CD8-positive, alpha-beta memory T cell (primary cell): ENCODE measurements at regions of chr14 and their contacts with region 1.

Region 1: DNA sequence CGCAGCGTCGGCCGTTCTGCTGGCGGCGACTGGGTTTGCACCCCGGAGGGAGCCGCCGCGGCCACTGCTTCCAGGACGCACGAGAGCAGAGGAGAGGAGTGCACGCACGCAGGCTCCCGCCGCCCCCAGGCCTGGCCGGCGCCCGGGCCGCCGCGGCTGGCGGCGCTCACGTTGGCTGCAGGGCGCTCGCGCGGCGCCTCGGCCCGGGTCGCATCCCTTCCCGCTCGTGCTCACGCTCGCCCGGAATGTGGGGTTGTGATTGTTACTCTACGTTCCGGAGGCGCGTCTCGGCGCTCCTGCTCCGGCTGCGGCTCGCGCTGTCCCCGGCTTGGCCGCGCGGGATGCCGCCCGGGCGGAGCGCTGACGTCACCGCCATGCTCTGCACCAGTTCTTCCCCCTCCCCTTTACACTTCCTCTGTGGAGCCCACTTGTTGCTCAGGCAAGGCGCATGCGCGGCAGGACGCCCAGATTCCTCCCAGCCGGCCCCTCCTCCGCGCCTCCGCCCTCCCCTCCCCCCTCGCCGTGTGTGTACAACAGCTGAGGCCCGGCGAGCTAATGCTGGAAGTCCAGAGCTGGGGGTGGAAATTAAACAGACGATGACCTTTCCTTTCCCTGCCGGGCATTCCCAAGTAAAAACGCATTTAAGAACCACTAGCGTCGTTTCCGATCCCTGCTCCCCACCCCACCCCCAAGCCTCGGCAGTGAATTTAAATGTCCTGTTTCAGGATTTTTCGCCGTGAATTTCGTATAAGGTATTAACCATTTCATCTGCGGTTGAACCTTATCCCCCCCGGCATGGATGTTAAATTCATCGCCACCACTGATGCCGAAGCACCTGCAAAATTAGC is at the start of gene IRF2BPL:
- DNase-seq: peak; percentile 89 to 97 (median 93)
- H3K4me3 ChIP-seq: peak within 1 kb of the TSS; percentile 72
- H3K4me3 Mint-ChIP-seq: peak within 1 kb of the TSS; percentile 91 to 96 (median 94)
- H3K27ac ChIP-seq: peak within 1 kb of the TSS; percentile 87
- H3K27ac Mint-ChIP-seq: peak within 1 kb of the TSS; percentile 94 to 100 (median 98)
- H3K4me1 ChIP-seq: peaks cover 69% of the 10 kb centered on the region
- H3K4me1 Mint-ChIP-seq: peaks cover 51 to 69% (median 58%) of the 10 kb centered on the region in 3 donors
- H3K27me3 ChIP-seq: no peaks in the 10 kb centered on the region
- H3K27me3 Mint-ChIP-seq: peaks cover 0 to 3% of the 10 kb centered on the region in 2 donors
- total RNA-seq, gene IRF2BPL: 25.6 to 27.2 TPM

Region 2: DNA sequence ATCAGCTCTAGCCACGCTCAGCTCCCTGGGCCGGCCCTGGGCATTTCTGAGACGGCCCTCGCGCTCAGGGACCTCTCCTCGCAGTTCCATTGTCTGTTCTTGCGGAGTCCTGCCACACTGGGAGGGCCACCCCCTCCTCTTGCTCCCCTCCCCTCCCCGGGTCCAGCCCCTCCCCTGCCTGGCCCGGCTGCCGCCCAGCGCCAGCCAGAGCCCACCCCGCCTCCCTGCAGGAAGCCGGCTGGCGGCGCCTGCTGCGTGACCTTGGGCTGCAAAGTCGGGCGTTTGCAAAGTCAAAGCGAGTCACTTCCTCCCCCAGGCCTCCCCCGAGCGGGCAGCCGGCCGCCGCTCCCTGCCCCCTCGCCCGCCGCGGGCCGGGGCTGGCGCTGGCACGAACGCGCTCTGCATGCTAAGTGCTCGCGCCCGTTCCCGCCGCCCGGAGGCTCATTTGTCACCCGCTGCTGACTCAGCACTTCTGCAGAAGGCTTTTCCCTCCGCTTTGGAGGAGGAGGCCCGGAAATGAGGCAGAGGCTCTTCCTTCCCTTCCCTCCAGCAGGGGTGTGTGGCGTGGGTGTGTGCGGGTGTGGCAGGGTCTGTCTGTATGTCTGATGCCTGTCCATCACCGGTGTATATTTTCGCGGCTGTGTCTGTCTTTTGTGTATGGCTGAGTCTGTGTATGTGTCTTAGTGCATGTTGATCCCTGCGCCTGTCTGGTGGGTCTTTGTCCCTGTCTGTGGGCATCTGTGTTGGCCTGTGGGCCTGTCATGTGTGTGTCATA is 72.1 kb before region 1 on chr14:
- CTCF ChIA-PET with region 1: interaction called, 36 read pairs
- POLR2A ChIA-PET with region 1: interaction called, 37 read pairs
- DNase-seq: peak; percentile 82 to 91 (median 87)
- H3K4me3 ChIP-seq: peak overlapping the region; percentile 50
- H3K4me3 Mint-ChIP-seq: peak overlapping the region; percentile 86 to 95 (median 87)
- H3K27ac ChIP-seq: peak overlapping the region; percentile 94
- H3K27ac Mint-ChIP-seq: peak overlapping the region; percentile 95 to 100 (median 99)
- H3K4me1 ChIP-seq: peaks cover 50% of the 10 kb centered on the region
- H3K4me1 Mint-ChIP-seq: peaks cover 59 to 74% (median 65%) of the 10 kb centered on the region in 3 donors
- H3K27me3 ChIP-seq: no peaks in the 10 kb centered on the region
- H3K27me3 Mint-ChIP-seq: peaks cover 0 to 1% of the 10 kb centered on the region in 2 donors

Region 3: GRCh38 chr14:77040059-77040740 is 11.6 kb after region 1 on chr14:
- CTCF ChIA-PET with region 1: interaction called, 22 read pairs
- POLR2A ChIA-PET with region 1: interaction called, 62 read pairs
- DNase-seq: peak; percentile 93 to 99 (median 97)
- H3K4me3 ChIP-seq: peak overlapping the region; percentile 82
- H3K4me3 Mint-ChIP-seq: peak overlapping the region; percentile 84 to 92 (median 89)
- H3K27ac ChIP-seq: peak overlapping the region; percentile 89
- H3K27ac Mint-ChIP-seq: peak overlapping the region; percentile 95 to 100 (median 99)
- H3K4me1 ChIP-seq: peaks cover 80% of the 10 kb centered on the region
- H3K4me1 Mint-ChIP-seq: peaks cover 74 to 94% (median 89%) of the 10 kb centered on the region in 3 donors
- H3K27me3 ChIP-seq: no peaks in the 10 kb centered on the region
- H3K27me3 Mint-ChIP-seq: peaks cover 0 to 2% of the 10 kb centered on the region in 2 donors

Region 4: GRCh38 chr14:77111043-77111442 is 82.4 kb after region 1 on chr14:
- CTCF ChIA-PET with region 1: no interaction called
- POLR2A ChIA-PET with region 1: no interaction called
- DNase-seq: no peak
- H3K4me3 ChIP-seq: no peak overlapping the region
- H3K4me3 Mint-ChIP-seq: no peak overlapping the region
- H3K27ac ChIP-seq: no peak overlapping the region
- H3K27ac Mint-ChIP-seq: no peak overlapping the region
- H3K4me1 ChIP-seq: no peaks in the 10 kb centered on the region
- H3K4me1 Mint-ChIP-seq: peaks cover 0 to 7% (median 0%) of the 10 kb centered on the region in 3 donors
- H3K27me3 ChIP-seq: no peaks in the 10 kb centered on the region
- H3K27me3 Mint-ChIP-seq: no peaks in the 10 kb centered on the region